ENCODE measurements at regions of chr10 and their contacts with region 1.

Region 1: DNA sequence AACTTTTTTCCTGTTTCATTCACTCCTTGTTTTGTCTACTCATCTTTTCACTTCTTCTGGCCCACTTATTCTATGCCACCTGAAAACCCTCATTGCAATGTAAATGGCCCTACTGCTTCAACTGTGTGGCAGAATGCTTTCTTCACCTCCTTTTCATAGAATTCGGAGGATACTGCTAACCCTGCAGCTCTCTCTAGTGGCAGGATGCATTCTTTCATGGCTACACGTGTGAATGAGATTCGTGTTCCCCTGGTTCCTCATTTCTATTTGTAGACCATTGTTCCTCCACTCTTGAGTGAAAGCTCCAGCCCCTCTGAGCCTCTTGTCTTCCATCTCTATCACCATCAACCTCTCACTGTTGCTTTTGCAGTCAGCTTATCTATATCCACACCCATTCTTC is 20.9 kb upstream of the CYP26C1 start:
- DNase-seq: no peak
- ATAC-seq: no peak
- H3K4me3 ChIP-seq: no peak overlapping the region
- H3K4me3 Mint-ChIP-seq: no peak overlapping the region
- H3K27ac ChIP-seq: no peak overlapping the region
- H3K27ac Mint-ChIP-seq: peak overlapping the region in 1 of 9 donors; percentile 0
- H3K4me1 ChIP-seq: no peaks in the 10 kb centered on the region
- H3K4me1 Mint-ChIP-seq: peaks cover 0 to 5% (median 0%) of the 10 kb centered on the region in 7 donors
- H3K27me3 ChIP-seq: no peaks in the 10 kb centered on the region
- H3K27me3 Mint-ChIP-seq: no peaks in the 10 kb centered on the region

Region 2: DNA sequence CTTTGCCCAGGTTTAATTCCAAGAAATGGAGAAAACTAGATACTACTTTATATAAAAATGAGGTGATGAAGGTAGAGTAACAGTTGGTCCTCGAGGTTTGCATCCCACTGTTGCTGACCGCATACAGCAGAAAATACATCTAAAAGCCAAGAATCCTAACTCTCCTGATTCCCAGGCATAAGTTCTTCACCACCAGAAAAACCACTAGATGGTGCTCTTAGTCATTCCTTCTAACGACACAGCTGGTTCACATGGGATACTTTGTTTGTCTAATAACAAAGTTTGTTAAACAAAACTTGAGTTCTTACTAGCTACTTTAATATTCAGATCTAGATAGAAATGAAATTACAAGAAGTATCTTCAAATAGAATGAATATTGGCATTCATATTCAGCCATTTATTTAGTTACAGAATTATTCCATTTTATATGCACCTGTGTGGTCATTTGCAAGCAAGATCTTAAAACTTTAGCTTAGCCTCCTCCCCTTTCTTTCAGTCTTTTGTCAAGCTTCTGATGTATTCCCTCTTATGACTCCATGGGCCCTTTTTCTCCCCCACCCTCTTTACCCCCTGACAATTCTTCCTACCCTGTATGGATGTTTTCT is 33.2 kb before region 1 on chr10:
- CTCF ChIA-PET with region 1: interaction called, 3 read pairs
- POLR2A ChIA-PET with region 1: interaction called, 5 read pairs
- intact Hi-C with region 1: loop called in 1 of 2 experiments (anchors 5 kb)
- DNase-seq: no peak
- ATAC-seq: no peak
- H3K4me3 ChIP-seq: no peak overlapping the region
- H3K4me3 Mint-ChIP-seq: no peak overlapping the region
- H3K27ac ChIP-seq: no peak overlapping the region
- H3K27ac Mint-ChIP-seq: no peak overlapping the region
- H3K4me1 ChIP-seq: no peaks in the 10 kb centered on the region
- H3K4me1 Mint-ChIP-seq: peaks cover 0 to 6% (median 0%) of the 10 kb centered on the region in 7 donors
- H3K27me3 ChIP-seq: no peaks in the 10 kb centered on the region
- H3K27me3 Mint-ChIP-seq: no peaks in the 10 kb centered on the region

Measured in naive thymus-derived CD4-positive, alpha-beta T cell (primary cell).